PC-9 (cell line): ENCODE measurements at regions of chr9 and their contacts with region 1.

Region 1: DNA sequence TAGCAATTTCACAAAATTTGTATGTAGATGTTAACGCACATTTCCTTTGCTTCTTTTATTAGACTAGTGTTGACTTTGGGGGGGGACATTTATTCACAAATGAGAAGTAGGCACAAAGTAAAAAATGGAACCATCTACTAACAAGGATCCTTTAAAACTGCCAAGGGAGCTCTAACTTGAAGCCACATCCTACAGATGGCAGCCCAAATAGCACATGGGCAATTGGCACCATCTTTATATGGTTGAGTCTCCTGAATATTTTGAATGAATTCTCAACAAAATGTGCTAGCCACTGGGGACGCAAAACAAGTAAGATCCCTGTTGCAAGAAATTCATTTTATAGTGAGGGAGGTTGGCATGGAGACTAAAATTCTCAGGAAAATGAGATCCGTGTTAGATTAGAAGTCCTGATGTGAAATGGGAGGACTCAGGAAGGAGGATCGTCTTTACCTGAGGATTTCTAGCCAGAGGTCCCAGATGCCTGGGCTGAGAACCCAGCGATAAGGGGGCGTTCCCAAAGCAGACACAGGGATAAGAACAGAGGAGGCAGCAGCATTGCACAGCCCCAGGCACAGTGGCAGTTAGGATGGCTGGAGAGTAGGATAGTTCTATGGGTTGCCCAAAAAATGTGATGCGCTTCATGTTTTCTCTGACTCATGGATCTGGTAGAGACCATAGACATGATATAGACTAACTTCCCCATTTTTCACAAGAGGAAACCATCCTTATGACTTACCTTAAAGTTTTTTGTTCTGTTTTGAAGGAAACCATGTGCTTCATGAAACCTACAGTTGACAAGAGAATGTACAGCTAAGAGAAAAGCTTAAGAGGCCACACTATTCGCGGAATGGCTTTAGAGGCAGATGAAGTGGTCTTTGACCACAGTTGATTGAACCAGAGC is 37.4 kb downstream of the C9orf152 start:
- DNase-seq: no peak
- H3K4me3 ChIP-seq: no peak overlapping the region
- H3K27ac ChIP-seq: no peak overlapping the region
- H3K4me1 ChIP-seq: no peaks in the 10 kb centered on the region
- H3K27me3 ChIP-seq: no peaks in the 10 kb centered on the region
- CTCF ChIP-seq: no peak

Region 2: GRCh38 chr9:110031511-110032173 is 139.0 kb before region 1 on chr9:
- CTCF ChIA-PET with region 1: no interaction called
- POLR2A ChIA-PET with region 1: no interaction called
- intact Hi-C with region 1: no loop called
- DNase-seq: peak in 1 of 2 experiments; percentile 91
- H3K4me3 ChIP-seq: no peak overlapping the region
- H3K27ac ChIP-seq: peak overlapping the region; percentile 58
- H3K4me1 ChIP-seq: peaks cover 40% of the 10 kb centered on the region
- H3K27me3 ChIP-seq: no peaks in the 10 kb centered on the region
- CTCF ChIP-seq: no peak

Region 3: GRCh38 chr9:110058304-110058953 is 112.2 kb before region 1 on chr9:
- CTCF ChIA-PET with region 1: no interaction called
- POLR2A ChIA-PET with region 1: no interaction called
- intact Hi-C with region 1: no loop called
- DNase-seq: peak; percentile 54 to 67
- H3K4me3 ChIP-seq: no peak overlapping the region
- H3K27ac ChIP-seq: peak overlapping the region; percentile 8; the same call in 1 of the 2 replicates
- H3K4me1 ChIP-seq: peaks cover 7% of the 10 kb centered on the region
- H3K27me3 ChIP-seq: no peaks in the 10 kb centered on the region
- CTCF ChIP-seq: peak; percentile 77

Region 4: DNA sequence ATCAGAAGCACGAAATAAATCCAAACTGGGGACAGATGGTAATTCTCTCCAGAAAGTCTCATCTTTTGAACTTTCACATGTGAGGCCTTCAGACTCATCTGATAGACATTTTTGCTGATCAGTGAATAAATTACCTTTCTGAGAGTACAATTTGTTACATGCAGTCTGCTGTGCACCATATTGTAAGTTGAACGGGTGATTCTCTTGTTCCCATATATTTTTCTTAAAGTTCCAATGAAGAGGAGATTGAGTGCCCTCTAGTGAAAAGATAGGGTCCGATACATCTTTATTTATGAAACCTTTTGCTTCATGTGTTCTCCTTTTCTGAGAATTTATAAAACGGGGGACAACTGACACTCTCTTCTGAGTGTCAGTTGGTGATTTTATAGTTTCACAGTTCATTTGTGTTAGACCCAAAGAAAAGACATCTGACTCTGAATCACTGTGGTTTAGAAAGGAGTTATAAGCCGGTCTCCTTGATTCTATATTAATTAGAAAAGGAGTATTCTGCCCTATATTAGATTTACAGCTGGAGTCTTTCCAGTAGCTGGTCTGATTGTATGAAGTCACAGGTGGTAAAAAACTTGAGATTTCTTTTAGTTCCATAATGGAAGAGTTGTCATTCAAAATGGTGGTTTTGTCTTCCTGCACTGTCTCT is 1521.2 kb after region 1 on chr9:
- CTCF ChIA-PET with region 1: interaction called, 13 read pairs
- POLR2A ChIA-PET with region 1: no interaction called
- intact Hi-C with region 1: no loop called
- DNase-seq: peak in 1 of 2 experiments; percentile 45
- H3K4me3 ChIP-seq: no peak overlapping the region
- H3K27ac ChIP-seq: no peak overlapping the region
- H3K4me1 ChIP-seq: no peaks in the 10 kb centered on the region
- H3K27me3 ChIP-seq: no peaks in the 10 kb centered on the region
- CTCF ChIP-seq: peak; percentile 63

Region 5: GRCh38 chr9:111886983-111887711 is 1716.5 kb after region 1 on chr9:
- CTCF ChIA-PET with region 1: interaction called, 12 read pairs
- POLR2A ChIA-PET with region 1: no interaction called
- intact Hi-C with region 1: no loop called
- DNase-seq: no peak
- H3K4me3 ChIP-seq: no peak overlapping the region
- H3K27ac ChIP-seq: no peak overlapping the region
- H3K4me1 ChIP-seq: peaks cover 18% of the 10 kb centered on the region
- H3K27me3 ChIP-seq: no peaks in the 10 kb centered on the region
- CTCF ChIP-seq: no peak